Activated naive CD4-positive, alpha-beta T cell treated with anti-CD3 and anti-CD28 coated beads for 36 hours (primary cell): ENCODE measurements at regions of chr1 and their contacts with region 1.

Region 1: GRCh38 chr1:8477166-8477982 is 159.5 kb downstream of the SLC45A1 start:
- DNase-seq: no peak
- H3K4me3 Mint-ChIP-seq: no peak overlapping the region
- H3K27ac Mint-ChIP-seq: peak overlapping the region; percentile 38
- H3K4me1 Mint-ChIP-seq: peaks cover 48% of the 10 kb centered on the region
- H3K27me3 Mint-ChIP-seq: no peaks in the 10 kb centered on the region

Region 2: GRCh38 chr1:8423650-8424538 is 53.5 kb before region 1 on chr1:
- CTCF ChIA-PET with region 1: no interaction called
- intact Hi-C with region 1: loop called (anchors 1 kb)
- DNase-seq: peak; percentile 62
- H3K4me3 Mint-ChIP-seq: peak overlapping the region; percentile 85
- H3K27ac Mint-ChIP-seq: peak overlapping the region; percentile 97
- H3K4me1 Mint-ChIP-seq: peaks cover 38% of the 10 kb centered on the region
- H3K27me3 Mint-ChIP-seq: no peaks in the 10 kb centered on the region

Region 3: GRCh38 chr1:8497210-8497801 is 19.9 kb after region 1 on chr1:
- CTCF ChIA-PET with region 1: no interaction called
- intact Hi-C with region 1: loop called (anchors 1 kb)
- DNase-seq: no peak
- H3K4me3 Mint-ChIP-seq: no peak overlapping the region
- H3K27ac Mint-ChIP-seq: no peak overlapping the region
- H3K4me1 Mint-ChIP-seq: peaks cover 30% of the 10 kb centered on the region
- H3K27me3 Mint-ChIP-seq: no peaks in the 10 kb centered on the region

Region 4: DNA sequence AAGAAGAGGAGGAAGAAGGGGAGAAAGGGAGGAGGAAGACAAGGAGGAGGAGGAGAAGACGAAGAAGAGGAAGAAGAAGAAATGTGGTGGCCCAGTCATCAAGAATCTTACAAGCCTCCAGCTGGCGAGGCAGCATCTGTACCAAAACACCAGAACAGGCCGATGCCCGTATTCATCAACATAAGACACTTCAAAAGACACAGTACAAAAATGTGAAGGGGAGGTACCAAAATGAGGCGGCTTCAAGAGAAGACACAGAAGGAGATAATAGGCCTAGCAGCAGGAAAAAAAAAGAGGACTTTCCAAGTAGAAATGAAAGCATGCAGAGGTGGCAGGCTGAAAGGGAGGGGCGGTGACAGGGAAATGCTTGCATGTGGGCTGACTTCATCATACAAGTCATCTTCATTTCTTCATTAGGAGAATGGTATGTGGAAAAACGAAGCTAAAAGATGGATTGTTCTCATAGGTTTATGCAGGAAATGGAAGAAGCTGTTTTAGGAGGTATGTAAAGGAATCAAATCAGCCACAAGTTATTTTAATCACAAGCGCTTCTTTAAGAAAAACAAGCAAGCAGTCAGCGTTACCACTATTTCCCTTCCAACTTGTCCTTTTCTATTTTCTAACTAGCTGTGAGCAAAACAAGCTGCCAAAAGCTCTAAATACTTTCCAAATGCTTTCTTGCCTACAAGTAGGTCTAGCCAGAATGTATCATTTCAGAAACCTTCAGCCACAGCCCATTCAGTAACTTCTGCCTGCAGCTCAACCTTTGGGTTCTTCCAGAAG is 32.9 kb after region 1 on chr1:
- CTCF ChIA-PET with region 1: no interaction called
- intact Hi-C with region 1: loop called (anchors 5 kb)
- DNase-seq: peak; percentile 81
- H3K4me3 Mint-ChIP-seq: peak overlapping the region; percentile 54
- H3K27ac Mint-ChIP-seq: peak overlapping the region; percentile 93
- H3K4me1 Mint-ChIP-seq: peaks cover 46% of the 10 kb centered on the region
- H3K27me3 Mint-ChIP-seq: no peaks in the 10 kb centered on the region

Region 5: DNA sequence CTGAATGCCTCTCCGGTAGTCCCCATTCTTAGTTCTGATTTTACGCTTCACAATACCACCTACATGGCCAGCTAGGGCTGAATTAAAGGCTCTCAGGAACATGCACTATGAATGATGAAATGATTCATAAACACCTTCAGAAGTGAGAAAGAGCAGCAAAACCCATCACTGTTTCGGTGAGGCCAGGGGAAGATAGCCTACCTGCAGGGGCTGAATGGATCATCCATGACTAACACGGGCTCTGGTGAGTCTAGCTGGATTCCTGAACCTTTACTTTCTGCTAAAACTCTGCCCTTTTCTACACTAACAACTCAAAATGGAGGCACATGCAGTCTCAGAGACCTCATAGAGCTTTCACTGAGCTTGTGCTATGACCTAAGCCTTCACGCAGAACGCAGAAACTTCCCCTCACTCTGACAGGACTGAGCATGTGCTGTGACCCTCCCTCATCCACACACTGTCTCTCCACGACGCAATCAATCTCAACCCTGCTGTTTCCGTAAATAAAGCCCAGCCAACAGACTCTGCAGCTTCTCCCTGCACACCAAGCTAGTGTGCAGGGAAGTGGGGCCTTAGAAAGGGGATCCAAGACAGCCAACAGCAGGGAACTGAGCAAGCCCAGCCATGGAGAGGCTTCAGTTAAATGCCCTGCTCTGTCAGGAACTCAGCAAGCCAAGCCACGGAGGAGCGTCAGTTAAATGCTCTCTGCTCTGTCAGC is 48.3 kb after region 1 on chr1:
- CTCF ChIA-PET with region 1: interaction called, 5 read pairs
- intact Hi-C with region 1: loop called (anchors 2 kb)
- DNase-seq: peak; percentile 86
- H3K4me3 Mint-ChIP-seq: no peak overlapping the region
- H3K27ac Mint-ChIP-seq: no peak overlapping the region
- H3K4me1 Mint-ChIP-seq: peaks cover 26% of the 10 kb centered on the region
- H3K27me3 Mint-ChIP-seq: no peaks in the 10 kb centered on the region

Region 6: DNA sequence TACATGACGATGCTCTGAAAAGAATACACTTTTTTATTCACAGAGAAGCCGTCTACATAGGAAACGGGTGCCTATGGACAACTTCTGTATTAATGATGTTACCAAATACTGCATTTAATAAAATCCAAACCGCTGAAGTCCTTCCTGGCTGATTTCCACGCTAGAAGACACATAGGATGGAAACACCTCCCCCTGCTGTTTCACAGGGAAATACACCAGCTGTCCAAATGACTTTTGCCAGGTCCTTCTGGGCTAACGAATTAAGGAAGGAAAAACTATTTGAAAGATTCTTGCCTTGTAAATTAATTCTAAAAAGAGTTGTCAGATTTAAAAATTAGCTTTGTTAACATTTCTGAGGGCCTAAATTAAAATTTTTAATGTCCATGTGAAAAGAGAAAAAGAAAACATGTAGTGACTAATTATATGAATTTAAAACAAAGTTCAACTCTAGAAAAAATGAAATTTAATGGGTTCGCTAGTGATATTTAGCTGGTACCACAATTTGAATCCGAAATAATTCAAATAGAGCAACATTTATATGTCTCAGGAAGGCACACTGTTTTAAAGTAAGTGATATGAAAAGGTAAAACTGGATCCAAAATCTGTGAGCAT is 194.0 kb after region 1 on chr1:
- CTCF ChIA-PET with region 1: no interaction called
- intact Hi-C with region 1: loop called (anchors 5 kb)
- DNase-seq: peak; percentile 43
- H3K4me3 Mint-ChIP-seq: no peak overlapping the region
- H3K27ac Mint-ChIP-seq: no peak overlapping the region
- H3K4me1 Mint-ChIP-seq: peaks cover 52% of the 10 kb centered on the region
- H3K27me3 Mint-ChIP-seq: no peaks in the 10 kb centered on the region

Region 7: GRCh38 chr1:8817406-8818324 is 340.3 kb after region 1 on chr1 and contains the start of gene RERE:
- CTCF ChIA-PET with region 1: no interaction called
- intact Hi-C with region 1: loop called (anchors 10 kb)
- DNase-seq: peak; percentile 94
- H3K4me3 Mint-ChIP-seq: peak within 1 kb of the TSS; percentile 86
- H3K27ac Mint-ChIP-seq: peak within 1 kb of the TSS; percentile 93
- H3K4me1 Mint-ChIP-seq: peaks cover 45% of the 10 kb centered on the region
- H3K27me3 Mint-ChIP-seq: no peaks in the 10 kb centered on the region
- total RNA-seq, gene RERE: 46.4 to 47.6 TPM